Adrenal gland (tissue), 19 donors: ENCODE measurements at regions of chr1 and their contacts with region 1.

Region 1: GRCh38 chr1:155208541-155209311 is at the start of gene MTX1:
- DNase-seq: peak; percentile 84 to 93 (median 87)
- H3K4me3 ChIP-seq: peak within 1 kb of the TSS; percentile 55 to 94 (median 84)
- H3K27ac ChIP-seq: peak within 1 kb of the TSS; percentile 80 to 98 (median 89)
- H3K4me1 ChIP-seq: peaks cover 24 to 30% of the 10 kb centered on the region in 2 donors
- H3K27me3 ChIP-seq: no peaks in the 10 kb centered on the region
- CTCF ChIP-seq: no peak
- POLR2A ChIP-seq: peak in 1 of 2 donors; percentile 25
- total RNA-seq, gene MTX1: 39.2 to 83.8 (median 45.6) TPM

Region 2: GRCh38 chr1:155244368-155245162 is 35.8 kb after region 1 on chr1:
- intact Hi-C with region 1: loop called in 1 of 2 experiments (anchors 5 kb)
- DNase-seq: peak; percentile 95 to 99 (median 98)
- H3K4me3 ChIP-seq: peak overlapping the region in 3 of 4 donors; percentile 45 to 63 (median 49)
- H3K27ac ChIP-seq: peak overlapping the region; percentile 84 to 96 (median 87)
- H3K4me1 ChIP-seq: peaks cover 20 to 21% of the 10 kb centered on the region in 2 donors
- H3K27me3 ChIP-seq: no peaks in the 10 kb centered on the region
- CTCF ChIP-seq: peak in 5 of 6 experiments; percentile 46 to 98 (median 89)
- POLR2A ChIP-seq: peak; percentile 93 to 94